Activated CD4-positive, alpha-beta T cell treated with anti-CD3 and anti-CD28 coated beads for 36 hours (primary cell): ENCODE measurements at regions of chr20 and their contacts with region 1.

Region 1: DNA sequence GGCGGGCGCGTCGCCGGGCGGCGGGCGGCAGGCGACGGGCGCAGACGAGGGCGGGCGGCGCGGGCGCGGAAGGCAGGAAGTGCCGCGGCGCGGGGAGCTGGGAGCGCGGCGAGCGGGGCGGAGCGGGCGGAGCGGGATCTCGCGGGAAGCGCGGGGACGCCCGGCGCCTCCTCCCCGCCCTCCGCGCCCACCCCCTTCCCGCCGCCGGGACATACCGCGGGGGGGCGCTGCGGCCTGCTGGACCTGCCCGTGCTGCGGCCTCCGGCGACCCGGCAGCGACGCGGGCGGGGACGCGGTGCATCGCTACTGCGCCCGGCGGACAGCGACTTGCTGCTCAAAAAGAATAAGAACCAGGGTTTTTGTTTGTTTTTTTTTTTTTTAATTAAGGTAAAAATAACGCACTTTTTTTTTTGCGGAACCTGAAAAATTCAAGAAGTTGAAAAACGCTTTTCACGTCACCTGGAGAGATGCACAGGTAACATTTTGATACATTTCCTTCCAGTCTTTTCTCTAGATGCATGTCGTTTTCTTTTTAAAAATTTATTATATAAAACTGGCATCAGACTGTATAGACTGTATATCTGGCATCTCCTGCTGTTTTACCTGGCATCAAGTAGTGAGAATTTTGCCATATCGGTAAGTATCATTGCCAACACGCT is at the start of gene CENPB:
- DNase-seq: peak; percentile 95
- ATAC-seq: peak; percentile 89
- H3K4me3 Mint-ChIP-seq: peak within 1 kb of the TSS; percentile 77
- H3K27ac Mint-ChIP-seq: peak within 1 kb of the TSS; percentile 84
- H3K4me1 Mint-ChIP-seq: peaks cover 39% of the 10 kb centered on the region
- H3K27me3 Mint-ChIP-seq: no peaks in the 10 kb centered on the region
- total RNA-seq, gene CENPB: 46.2 to 48.3 TPM

Region 2: DNA sequence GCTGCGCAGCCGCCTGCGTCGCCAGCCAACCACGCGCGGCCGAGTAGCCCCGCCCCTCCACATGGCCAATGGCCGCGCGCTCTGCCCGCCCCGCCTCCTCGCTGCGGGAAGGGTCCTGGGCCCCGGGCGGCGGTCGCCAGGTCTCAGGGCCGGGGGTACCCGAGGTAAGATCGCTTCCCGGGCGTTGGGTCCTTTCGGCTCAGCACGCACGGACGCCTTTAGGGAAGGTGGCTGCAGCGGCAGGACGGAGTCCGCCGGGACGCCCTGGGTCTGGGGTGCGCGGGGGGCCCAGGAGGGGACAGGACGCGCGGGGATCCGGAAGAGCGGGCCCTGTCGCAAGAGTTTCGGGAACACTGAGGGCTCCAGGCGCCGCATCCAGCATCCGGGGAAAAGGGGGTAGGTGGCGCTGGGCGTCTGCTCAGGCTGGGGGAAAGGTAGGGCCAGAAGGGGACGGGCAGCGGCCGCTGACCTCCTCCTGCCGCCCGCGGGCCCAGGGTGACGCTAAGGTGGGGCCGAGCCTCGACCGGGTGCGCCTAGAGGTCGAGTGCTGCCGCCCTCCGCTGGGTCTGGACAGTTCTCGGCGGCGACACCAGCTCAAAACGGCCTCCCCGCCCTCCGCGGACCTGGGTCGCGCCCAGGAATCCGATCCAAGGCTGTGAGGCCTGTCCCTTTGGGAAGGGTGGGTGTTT is 60.1 kb after region 1 on chr20 and contains the start of gene MAVS:
- CTCF ChIA-PET with region 1: interaction called, 5 read pairs
- POLR2A ChIA-PET with region 1: no interaction called
- intact Hi-C with region 1: loop called in 1 of 2 experiments (anchors 2 kb)
- DNase-seq: peak; percentile 91
- ATAC-seq: peak; percentile 98
- H3K4me3 Mint-ChIP-seq: peak within 1 kb of the TSS; percentile 88
- H3K27ac Mint-ChIP-seq: peak within 1 kb of the TSS; percentile 84
- H3K4me1 Mint-ChIP-seq: peaks cover 22% of the 10 kb centered on the region
- H3K27me3 Mint-ChIP-seq: no peaks in the 10 kb centered on the region
- total RNA-seq, gene MAVS: 23.2 to 25.9 TPM

Region 3: DNA sequence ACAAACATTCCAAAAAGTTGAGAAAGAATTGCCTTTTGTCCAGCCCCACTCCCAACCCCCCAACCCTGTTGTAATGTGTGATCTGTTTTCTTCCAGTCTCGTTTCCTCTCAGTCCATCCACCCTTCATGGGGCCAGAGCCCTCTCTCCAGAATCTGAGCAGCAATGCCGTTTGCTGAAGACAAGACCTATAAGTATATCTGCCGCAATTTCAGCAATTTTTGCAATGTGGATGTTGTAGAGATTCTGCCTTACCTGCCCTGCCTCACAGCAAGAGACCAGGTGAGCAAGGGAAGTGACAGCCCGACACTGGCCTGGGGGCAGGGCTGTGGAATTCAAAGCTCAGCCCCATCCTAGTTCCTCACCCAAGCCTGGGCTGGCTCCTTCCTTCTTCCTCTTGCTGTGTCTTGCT is 67.7 kb after region 1 on chr20:
- CTCF ChIA-PET with region 1: interaction called, 6 read pairs
- POLR2A ChIA-PET with region 1: no interaction called
- intact Hi-C with region 1: loop called (anchors 1 kb)
- DNase-seq: no peak
- ATAC-seq: no peak
- H3K4me3 Mint-ChIP-seq: no peak overlapping the region
- H3K27ac Mint-ChIP-seq: no peak overlapping the region
- H3K4me1 Mint-ChIP-seq: peaks cover 4% of the 10 kb centered on the region
- H3K27me3 Mint-ChIP-seq: no peaks in the 10 kb centered on the region

Region 4: DNA sequence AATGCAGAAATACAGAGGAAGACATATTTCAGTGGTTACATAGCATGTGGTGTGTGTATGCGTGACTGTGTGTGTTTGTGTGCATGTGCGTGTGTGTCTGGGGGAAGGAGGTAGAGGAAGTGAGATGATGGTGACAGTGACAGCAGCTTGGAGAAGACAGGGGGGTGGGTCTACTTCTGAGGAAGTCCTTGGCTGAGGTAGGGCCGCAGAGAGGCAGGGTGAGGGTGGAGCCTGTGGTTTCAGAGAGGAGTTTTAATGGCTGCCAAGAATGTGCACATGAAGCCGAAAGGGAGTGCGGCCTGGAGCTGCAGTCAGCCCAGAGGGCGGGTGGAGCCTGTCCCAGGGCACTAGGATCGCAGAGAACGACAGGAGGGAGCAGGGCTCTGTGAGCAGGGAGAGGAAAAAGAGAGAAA is 251.3 kb after region 1 on chr20:
- CTCF ChIA-PET with region 1: no interaction called
- POLR2A ChIA-PET with region 1: no interaction called
- intact Hi-C with region 1: loop called in 1 of 2 experiments (anchors 5 kb)
- DNase-seq: peak; percentile 88
- ATAC-seq: peak; percentile 100
- H3K4me3 Mint-ChIP-seq: peak overlapping the region; percentile 69
- H3K27ac Mint-ChIP-seq: peak overlapping the region; percentile 99
- H3K4me1 Mint-ChIP-seq: peaks cover 17% of the 10 kb centered on the region
- H3K27me3 Mint-ChIP-seq: no peaks in the 10 kb centered on the region

Region 5: DNA sequence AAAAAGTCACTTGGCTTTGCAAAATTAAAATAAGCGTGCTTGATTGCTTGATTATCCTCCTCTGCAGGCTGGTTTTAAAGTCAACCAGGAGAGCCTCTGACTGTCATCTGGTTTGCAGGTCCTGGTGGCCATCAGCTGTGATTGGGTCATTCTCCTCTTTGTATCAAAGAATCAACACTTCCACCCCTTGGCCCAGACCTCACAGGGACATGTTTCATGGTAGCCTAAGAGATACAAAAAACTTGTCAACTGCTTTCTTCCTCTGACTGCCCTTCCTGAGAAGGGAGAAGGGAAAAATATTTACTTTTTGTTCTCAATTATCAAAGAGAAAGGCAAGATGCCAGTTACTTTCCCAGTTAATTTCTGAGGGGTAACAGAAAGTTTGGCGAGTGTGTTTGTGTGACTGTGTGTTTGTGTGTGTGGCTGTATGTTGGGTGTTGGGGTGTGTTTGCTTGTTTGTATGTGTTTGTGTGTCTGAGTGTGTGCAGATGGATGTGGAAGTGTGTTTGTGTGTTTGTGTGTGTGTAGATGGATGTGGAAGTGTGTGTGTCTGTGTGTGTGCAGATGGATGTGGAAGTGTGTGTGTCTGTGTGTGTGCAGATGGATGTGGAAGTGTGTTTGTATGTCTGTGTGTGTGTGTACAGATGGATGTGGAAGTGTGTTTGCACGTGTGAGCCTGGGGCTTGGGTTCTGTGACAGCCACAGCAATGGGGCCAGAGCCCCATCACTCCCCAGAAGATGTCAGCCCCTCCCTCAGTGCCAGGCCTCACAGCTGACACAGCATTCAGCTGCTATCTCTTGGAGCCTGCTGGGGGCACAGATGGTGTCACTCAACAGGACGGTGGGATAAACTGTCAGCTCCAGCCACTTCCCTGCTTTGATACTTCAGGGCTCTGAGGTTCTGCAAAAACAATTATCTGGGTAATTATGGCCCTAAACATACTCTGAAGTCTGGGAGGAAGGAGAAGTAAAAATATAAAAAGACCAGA is 327.1 kb after region 1 on chr20:
- CTCF ChIA-PET with region 1: no interaction called
- POLR2A ChIA-PET with region 1: no interaction called
- intact Hi-C with region 1: no loop called
- DNase-seq: no peak
- ATAC-seq: no peak
- H3K4me3 Mint-ChIP-seq: no peak overlapping the region
- H3K27ac Mint-ChIP-seq: no peak overlapping the region
- H3K4me1 Mint-ChIP-seq: peaks cover 20% of the 10 kb centered on the region
- H3K27me3 Mint-ChIP-seq: peaks cover 5% of the 10 kb centered on the region